Endothelial cell of umbilical vein (primary cell): ENCODE measurements at regions of chr6 and their contacts with region 1.

Region 1: DNA sequence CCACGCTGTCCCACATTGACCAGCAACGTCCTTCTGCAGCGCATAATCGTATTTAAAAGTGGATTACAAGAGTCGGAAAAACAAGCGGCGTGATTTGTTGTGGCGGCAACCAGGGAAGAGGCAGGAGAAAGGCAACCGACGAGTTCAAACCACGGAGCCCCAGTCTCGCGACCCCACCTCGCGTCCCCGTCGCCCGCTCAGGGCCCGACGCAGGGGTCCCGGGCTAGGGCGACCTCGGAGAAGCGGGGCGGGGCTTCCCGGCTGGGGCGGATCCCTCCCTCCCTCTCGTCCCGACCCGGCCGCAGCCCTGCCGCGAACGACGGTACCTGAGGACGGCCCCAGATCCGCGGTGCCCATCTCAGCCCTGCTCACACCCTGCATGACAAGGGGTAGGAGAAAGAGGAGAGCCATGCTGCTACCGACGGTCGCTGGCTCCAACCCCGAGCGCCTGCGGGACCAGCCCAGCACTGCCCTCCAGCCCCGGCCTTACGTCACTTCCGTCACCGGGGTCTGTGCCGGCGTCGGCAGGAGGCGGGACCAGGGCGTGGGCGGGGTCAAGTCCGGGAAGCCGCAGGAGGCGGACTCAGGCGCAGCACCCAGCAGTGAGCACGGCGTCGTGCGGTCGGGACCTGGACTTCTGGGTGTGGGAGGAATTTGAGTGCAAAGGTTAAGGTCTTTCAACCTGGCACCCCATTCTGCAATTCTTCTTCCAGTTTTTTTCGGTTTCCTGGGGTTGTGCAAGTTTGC is at the start of gene IFNGR1:
- DNase-seq: peak; percentile 93
- H3K4me3 ChIP-seq: peak within 1 kb of the TSS; percentile 9 to 85 (median 73)
- H3K27ac ChIP-seq: peak within 1 kb of the TSS; percentile 26
- H3K4me1 ChIP-seq: peaks cover 39% of the 10 kb centered on the region
- H3K27me3 ChIP-seq: no peaks in the 10 kb centered on the region
- CTCF ChIP-seq: no peak
- POLR2A ChIP-seq: peak; percentile 87
- total RNA-seq, gene IFNGR1: 27.5 and 31.2 TPM in 2 replicates

Region 2: DNA sequence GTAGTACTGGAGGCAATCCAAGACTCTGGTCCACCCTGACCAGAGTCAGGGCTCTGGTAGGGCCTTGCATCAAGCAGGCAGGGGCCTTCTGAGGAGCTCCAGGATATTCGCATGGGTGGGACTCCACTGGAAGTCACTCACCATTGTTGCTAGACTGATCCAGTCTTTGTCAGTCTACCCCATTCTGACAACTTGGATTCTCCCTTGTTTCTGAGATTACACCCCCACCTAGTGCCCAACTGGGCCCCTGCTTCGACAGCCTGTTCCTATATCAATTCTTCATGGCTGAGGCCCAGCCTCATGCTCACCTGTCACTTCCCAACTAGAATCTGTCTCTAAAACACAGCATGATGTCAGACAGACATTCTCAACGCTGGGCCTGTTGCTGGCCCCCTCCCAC is 291.8 kb before region 1 on chr6:
- CTCF ChIA-PET with region 1: no interaction called
- POLR2A ChIA-PET with region 1: no interaction called
- dilution Hi-C with region 1: no loop called
- intact Hi-C with region 1: no loop called
- DNase-seq: peak; percentile 17
- H3K4me3 ChIP-seq: no peak overlapping the region
- H3K27ac ChIP-seq: no peak overlapping the region
- H3K4me1 ChIP-seq: peaks cover 6% of the 10 kb centered on the region
- H3K27me3 ChIP-seq: peaks cover 18 to 32% of the 10 kb centered on the region in 2 experiments
- CTCF ChIP-seq: peak in 1 of 2 donors; percentile 39
- POLR2A ChIP-seq: no peak

Region 3: GRCh38 chr6:137155830-137156229 is 63.3 kb before region 1 on chr6:
- CTCF ChIA-PET with region 1: no interaction called
- POLR2A ChIA-PET with region 1: no interaction called
- dilution Hi-C with region 1: no loop called
- intact Hi-C with region 1: no loop called
- DNase-seq: no peak
- H3K4me3 ChIP-seq: no peak overlapping the region
- H3K27ac ChIP-seq: no peak overlapping the region
- H3K4me1 ChIP-seq: no peaks in the 10 kb centered on the region
- H3K27me3 ChIP-seq: peaks cover 0 to 3% of the 10 kb centered on the region in 2 experiments
- CTCF ChIP-seq: no peak
- POLR2A ChIP-seq: no peak

Region 4: DNA sequence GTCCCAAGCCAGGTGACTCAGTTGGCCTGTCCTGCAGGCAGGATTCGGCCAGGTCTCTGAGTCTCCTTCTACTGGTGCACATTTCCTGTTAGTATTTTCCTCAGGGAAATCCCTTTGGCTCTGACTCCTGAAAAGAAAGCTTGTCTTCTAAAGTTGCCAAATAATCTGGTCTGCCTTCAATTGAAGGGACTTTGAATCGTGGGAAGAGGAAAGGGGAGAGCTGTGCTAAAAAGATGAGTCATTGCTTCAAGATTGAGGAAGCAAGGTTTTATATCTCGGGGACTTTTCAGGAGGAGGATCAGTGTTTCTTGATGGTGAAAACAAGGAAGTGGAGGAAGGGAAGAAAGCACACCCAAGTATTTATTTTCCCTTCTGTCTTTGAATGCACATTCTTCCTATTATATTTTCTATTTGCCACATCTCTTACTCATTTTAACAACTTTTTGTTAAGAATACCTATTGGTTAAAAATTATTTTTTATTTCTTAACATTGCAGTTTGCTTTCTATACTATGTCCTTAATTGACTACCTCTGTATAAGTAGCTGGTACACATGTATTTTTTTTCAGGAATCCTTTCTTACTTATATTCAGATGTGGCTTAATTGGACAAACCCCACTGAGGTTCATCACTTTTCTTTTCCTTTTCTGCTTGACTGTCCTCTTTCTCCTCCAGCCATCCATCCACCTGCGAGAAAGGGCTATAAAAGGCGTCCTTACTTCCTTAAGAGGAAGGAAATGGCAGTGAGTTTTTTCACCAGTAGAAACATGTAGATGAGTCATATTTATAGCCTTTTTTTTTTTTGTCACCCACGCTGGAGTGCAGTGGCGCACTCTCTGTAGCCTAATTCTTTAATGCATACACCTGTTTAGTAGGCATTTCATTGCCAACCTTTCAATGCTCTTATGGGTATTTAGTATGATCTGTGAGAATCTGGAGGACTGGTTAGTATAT is 15.1 kb after region 1 on chr6:
- CTCF ChIA-PET with region 1: interaction called, 14 read pairs
- POLR2A ChIA-PET with region 1: interaction called, 5 read pairs
- dilution Hi-C with region 1: no loop called
- intact Hi-C with region 1: loop called (anchors 1 kb)
- DNase-seq: peak; percentile 91
- H3K4me3 ChIP-seq: peak overlapping the region in 1 of 3 experiments; percentile 18
- H3K27ac ChIP-seq: peak overlapping the region; percentile 57
- H3K4me1 ChIP-seq: peaks cover 18% of the 10 kb centered on the region
- H3K27me3 ChIP-seq: peaks cover 0 to 3% of the 10 kb centered on the region in 2 experiments
- CTCF ChIP-seq: no peak
- POLR2A ChIP-seq: no peak